ENCODE measurements at regions of chr17 and their contacts with region 1.

Region 1: DNA sequence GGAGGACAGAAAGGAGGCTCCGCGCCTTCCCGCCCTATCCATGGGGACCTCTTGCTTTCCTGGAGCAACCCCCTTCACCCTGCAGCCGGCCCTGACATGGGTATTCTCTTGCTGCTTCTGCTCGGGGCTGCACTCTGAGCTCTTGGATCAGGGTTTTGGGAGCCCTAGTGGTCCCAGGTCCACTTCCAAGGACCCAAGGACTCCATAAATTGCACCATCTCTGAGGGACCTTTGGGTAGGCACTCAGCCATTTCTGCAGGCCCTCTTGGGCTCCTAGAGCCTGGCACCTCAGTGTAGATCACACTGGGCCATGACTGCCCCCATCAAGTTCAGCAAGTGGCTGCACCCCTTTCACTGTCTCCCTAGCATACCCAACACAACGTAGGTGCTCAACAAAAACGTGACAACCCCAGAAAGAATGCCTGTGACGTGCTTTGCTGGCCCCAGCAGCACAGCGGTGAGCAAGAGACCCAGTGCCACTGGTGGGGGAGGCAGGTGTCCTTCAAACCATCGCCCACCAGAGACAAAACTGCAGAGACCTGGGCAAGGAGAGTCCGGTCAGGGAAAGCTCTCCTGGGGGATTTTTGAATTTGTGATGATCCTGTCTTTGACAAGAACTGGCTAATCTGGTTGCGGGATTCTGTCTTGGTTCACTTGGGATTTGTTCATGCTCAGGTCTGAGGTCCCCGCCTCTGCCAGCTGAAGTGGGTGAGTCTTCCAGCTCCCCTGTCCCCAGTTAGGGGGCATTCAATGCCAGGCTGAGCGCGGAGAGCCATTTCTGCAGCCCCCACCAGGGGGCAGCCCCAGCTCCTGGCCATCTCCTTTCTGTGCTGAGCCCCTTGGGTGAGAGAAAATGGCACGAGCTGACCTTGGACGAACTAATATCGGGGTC is 2.5 kb upstream of the RAB11FIP4 start:
- DNase-seq: peak in 6 of 10 donors; percentile 49 to 79 (median 60)
- H3K4me3 ChIP-seq: peak overlapping the region in 1 of 59 donors; percentile 18
- H3K27ac ChIP-seq: peak overlapping the region in 33 of 59 donors; percentile 2 to 91 (median 59)
- H3K27me3 ChIP-seq: peaks cover 0 to 6% (median 0%) of the 10 kb centered on the region in 45 donors
- CTCF ChIP-seq: peak; percentile 55 to 89 (median 80)

Region 2: GRCh38 chr17:31078290-31078689 is 310.7 kb before region 1 on chr17:
- intact Hi-C with region 1: no loop called
- DNase-seq: peak in 1 of 10 donors; percentile 45
- H3K4me3 ChIP-seq: no peak overlapping the region
- H3K27ac ChIP-seq: peak overlapping the region in 1 of 59 donors; percentile 26
- H3K27me3 ChIP-seq: no peaks in the 10 kb centered on the region
- CTCF ChIP-seq: no peak

Region 3: GRCh38 chr17:31094600-31095238 is 294.3 kb before region 1 on chr17 and contains the start of gene NF1:
- intact Hi-C with region 1: loop called in 1 of 2 experiments (anchors 10 kb)
- DNase-seq: peak; percentile 90 to 96 (median 95)
- H3K4me3 ChIP-seq: peak within 1 kb of the TSS; percentile 67 to 97 (median 81)
- H3K27ac ChIP-seq: peak within 1 kb of the TSS; percentile 75 to 97 (median 91)
- H3K27me3 ChIP-seq: no peaks in the 10 kb centered on the region
- CTCF ChIP-seq: peak in 41 of 56 donors; percentile 1 to 57 (median 29)
- total RNA-seq, gene NF1: 89.8 to 145 (median 119) TPM

Region 4: GRCh38 chr17:31327534-31328159 is 61.4 kb before region 1 on chr17:
- intact Hi-C with region 1: no loop called
- DNase-seq: no peak
- H3K4me3 ChIP-seq: no peak overlapping the region
- H3K27ac ChIP-seq: no peak overlapping the region
- H3K27me3 ChIP-seq: no peaks in the 10 kb centered on the region
- CTCF ChIP-seq: no peak

Region 5: GRCh38 chr17:31425282-31426040 is 36.4 kb after region 1 on chr17:
- intact Hi-C with region 1: loop called in 1 of 2 experiments (anchors 5 kb)
- DNase-seq: peak in 7 of 10 donors; percentile 59 to 77 (median 64)
- H3K4me3 ChIP-seq: peak overlapping the region in 30 of 59 donors; percentile 1 to 45 (median 17)
- H3K27ac ChIP-seq: peak overlapping the region in 57 of 59 donors; percentile 8 to 99 (median 70)
- H3K27me3 ChIP-seq: no peaks in the 10 kb centered on the region
- CTCF ChIP-seq: peak in 5 of 56 donors; percentile 6 to 26 (median 12)

Region 6: GRCh38 chr17:31433091-31433790 is 44.2 kb after region 1 on chr17:
- intact Hi-C with region 1: loop called in 1 of 2 experiments (anchors 2 kb)
- DNase-seq: no peak
- H3K4me3 ChIP-seq: no peak overlapping the region
- H3K27ac ChIP-seq: peak overlapping the region in 2 of 59 donors; percentile 17 to 41
- H3K27me3 ChIP-seq: no peaks in the 10 kb centered on the region
- CTCF ChIP-seq: no peak

Region 7: GRCh38 chr17:31524926-31525800 is 136.1 kb after region 1 on chr17:
- intact Hi-C with region 1: loop called (anchors 1 to 2 kb)
- DNase-seq: peak; percentile 79 to 94 (median 89)
- H3K4me3 ChIP-seq: peak overlapping the region in 1 of 59 donors; percentile 9
- H3K27ac ChIP-seq: peak overlapping the region in 42 of 59 donors; percentile 6 to 77 (median 50)
- H3K27me3 ChIP-seq: no peaks in the 10 kb centered on the region
- CTCF ChIP-seq: peak; percentile 64 to 99 (median 96)

Region 8: DNA sequence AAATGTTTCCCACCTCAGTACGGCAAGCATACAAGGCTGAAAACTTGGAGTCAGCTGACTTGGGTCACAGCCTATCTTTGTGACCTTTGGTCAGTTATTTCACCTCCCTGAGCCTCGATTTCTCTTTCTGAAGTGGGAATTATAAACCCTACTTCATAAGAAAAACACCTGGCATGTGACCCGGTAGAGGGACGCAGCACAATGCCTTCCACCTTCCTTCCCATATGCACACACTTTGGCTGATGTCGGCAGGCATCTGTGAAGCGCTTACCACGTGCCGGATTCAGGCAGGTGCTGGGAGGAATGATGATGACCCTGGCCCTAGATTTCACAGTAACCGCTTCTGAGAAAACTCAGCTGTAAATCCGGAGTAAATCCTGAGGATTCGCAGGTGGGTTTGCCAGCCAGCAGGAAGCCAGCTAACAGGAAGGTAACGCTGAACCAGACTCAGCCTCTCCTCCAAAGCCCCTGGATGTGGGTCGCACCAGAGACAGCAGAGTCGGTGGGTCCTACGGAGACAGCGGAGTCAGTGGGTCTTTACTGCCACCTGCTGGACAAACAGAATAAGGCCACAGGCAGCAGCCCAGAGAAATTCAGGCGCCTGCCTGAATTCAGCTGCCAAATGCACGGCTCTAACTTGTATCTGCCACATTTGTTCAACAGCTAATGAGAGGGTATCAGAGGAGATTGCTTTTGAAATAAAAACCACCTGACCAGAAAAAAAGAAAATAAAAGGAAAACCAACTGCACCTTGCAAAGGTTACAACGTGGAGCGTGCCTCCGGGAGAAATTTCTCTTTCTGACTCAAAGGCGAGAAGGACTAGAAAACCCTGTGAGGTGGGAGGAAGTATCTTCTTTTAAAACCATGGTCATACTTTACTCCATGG is 453.4 kb after region 1 on chr17:
- intact Hi-C with region 1: loop called (anchors 10 kb)
- DNase-seq: peak; percentile 53 to 85 (median 70)
- H3K4me3 ChIP-seq: peak overlapping the region in 57 of 59 donors; percentile 12 to 68 (median 43)
- H3K27ac ChIP-seq: peak overlapping the region in 42 of 59 donors; percentile 1 to 79 (median 50)
- H3K27me3 ChIP-seq: no peaks in the 10 kb centered on the region
- CTCF ChIP-seq: peak; percentile 85 to 99 (median 95)